ENCODE measurements at regions of chr2 and their contacts with region 1.

Region 1: GRCh38 chr2:99698896-99699295 is 209.1 kb upstream of the REV1 start:
- DNase-seq: no peak
- ATAC-seq: no peak

Region 2: GRCh38 chr2:99217929-99218501 is 480.9 kb before region 1 on chr2:
- intact Hi-C with region 1: no loop called
- DNase-seq: no peak
- ATAC-seq: no peak

Region 3: DNA sequence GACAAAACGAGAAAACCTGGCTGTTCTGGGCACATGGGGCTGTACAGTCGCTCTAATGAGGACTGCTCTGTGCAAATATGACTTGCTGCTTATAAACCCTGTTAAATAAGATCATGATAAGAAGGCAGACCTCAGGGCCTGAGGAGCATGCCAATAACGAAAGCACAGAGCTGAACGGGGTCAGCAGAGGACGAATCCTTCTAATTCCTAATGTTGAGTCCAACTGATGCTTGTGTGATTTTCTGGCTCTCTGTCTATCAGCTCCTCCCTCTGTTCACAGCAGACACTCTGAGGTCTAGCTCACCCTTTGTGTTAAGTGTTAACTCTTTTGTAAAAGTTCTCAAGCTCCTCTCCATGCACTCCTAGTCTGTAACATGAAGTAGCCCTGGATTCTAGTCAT is 41.9 kb before region 1 on chr2:
- intact Hi-C with region 1: loop called (anchors 1 kb)
- DNase-seq: no peak
- ATAC-seq: peak; percentile 75

Measured in Right ventricle myocardium inferior (tissue), 1 donor.